H1 (cell line): ENCODE measurements at regions of chr4 and their contacts with region 1.

Region 1: DNA sequence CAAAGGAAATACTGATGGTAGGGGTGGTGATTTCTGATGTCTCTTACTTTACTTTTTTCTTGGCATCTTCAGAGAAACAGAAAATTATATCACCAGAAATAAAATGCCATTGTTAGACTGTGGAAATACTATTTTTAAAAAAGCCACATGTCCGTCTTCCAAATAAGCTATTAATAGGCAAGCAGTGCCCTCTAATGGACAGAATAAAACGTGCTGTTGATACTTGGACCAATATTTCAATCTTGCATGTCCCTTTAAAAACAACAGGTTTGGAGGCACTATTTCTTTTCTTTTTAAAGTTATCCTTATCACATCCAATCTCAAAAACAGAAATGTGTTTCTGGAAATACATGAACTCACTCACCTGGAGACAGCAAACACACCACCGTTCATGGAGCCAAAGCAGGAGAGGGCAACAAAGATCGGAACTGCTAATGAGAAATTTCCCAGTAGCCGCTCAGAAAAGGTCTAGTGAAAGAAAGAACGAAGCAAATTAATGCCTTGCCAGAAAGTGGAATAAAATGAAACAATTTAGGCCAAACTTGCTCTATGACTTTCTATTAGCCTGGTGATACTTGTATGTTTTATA is 59.2 kb downstream of the SLC7A11 start:
- DNase-seq: no peak
- H3K4me3 ChIP-seq: no peak overlapping the region
- H3K27ac ChIP-seq: no peak overlapping the region
- H3K4me1 ChIP-seq: peaks cover 0 to 7% (median 5%) of the 10 kb centered on the region in 4 experiments; a peak in 2 of 7 replicates
- H3K27me3 ChIP-seq: no peaks in the 10 kb centered on the region
- CTCF ChIP-seq: peak in 2 of 3 experiments; percentile 25 to 57; a peak in 2 of 4 replicates
- EP300 ChIP-seq: no peak
- POLR2A ChIP-seq: no peak
- RAD21 ChIP-seq: peak; percentile 79

Region 2: GRCh38 chr4:137735561-137736104 is 447.3 kb before region 1 on chr4:
- CTCF ChIA-PET with region 1: interaction called, 10 read pairs
- POLR2A ChIA-PET with region 1: no interaction called
- DNase-seq: no peak
- H3K4me3 ChIP-seq: no peak overlapping the region
- H3K27ac ChIP-seq: no peak overlapping the region
- H3K4me1 ChIP-seq: no peaks in the 10 kb centered on the region
- H3K27me3 ChIP-seq: no peaks in the 10 kb centered on the region
- CTCF ChIP-seq: no peak
- EP300 ChIP-seq: no peak
- POLR2A ChIP-seq: no peak
- RAD21 ChIP-seq: no peak

Region 3: GRCh38 chr4:137923494-137923893 is 259.4 kb before region 1 on chr4:
- CTCF ChIA-PET with region 1: no interaction called
- POLR2A ChIA-PET with region 1: no interaction called
- DNase-seq: no peak
- H3K4me3 ChIP-seq: no peak overlapping the region
- H3K27ac ChIP-seq: no peak overlapping the region
- H3K4me1 ChIP-seq: no peaks in the 10 kb centered on the region
- H3K27me3 ChIP-seq: no peaks in the 10 kb centered on the region
- CTCF ChIP-seq: no peak
- EP300 ChIP-seq: no peak
- POLR2A ChIP-seq: no peak
- RAD21 ChIP-seq: no peak

Region 4: DNA sequence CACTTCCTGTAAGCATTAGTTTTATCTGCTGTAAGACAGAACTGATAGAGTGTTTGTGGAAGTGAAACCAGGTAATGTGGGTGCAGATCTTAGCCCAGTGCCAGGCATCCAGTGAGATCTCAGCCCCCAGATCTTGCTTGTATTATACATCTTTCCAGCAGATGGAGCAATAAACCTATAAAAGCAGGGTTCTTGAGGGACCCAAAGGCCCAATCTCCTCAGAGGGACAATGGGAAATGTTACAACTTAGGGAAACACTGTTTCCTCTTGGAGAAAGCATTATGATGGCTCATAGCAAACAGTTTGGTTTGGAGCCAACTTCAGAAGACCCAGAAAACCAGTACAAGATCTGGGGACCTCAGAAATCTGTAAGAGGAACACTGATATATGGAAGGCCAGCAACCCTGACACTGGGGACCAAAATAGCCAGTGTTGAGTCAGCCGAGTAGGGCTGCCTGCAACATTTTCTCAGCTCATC is 147.1 kb before region 1 on chr4:
- CTCF ChIA-PET with region 1: interaction called, 82 read pairs
- POLR2A ChIA-PET with region 1: no interaction called
- DNase-seq: no peak
- H3K4me3 ChIP-seq: no peak overlapping the region
- H3K27ac ChIP-seq: no peak overlapping the region
- H3K4me1 ChIP-seq: no peaks in the 10 kb centered on the region
- H3K27me3 ChIP-seq: no peaks in the 10 kb centered on the region
- CTCF ChIP-seq: peak in 2 of 3 experiments; percentile 61 to 77; a peak in 3 of 4 replicates
- EP300 ChIP-seq: no peak
- POLR2A ChIP-seq: no peak
- RAD21 ChIP-seq: peak; percentile 91 to 95

Region 5: GRCh38 chr4:138236035-138236434 is 53.1 kb after region 1 on chr4:
- CTCF ChIA-PET with region 1: no interaction called
- POLR2A ChIA-PET with region 1: no interaction called
- DNase-seq: no peak
- H3K4me3 ChIP-seq: no peak overlapping the region
- H3K27ac ChIP-seq: no peak overlapping the region
- H3K4me1 ChIP-seq: no peaks in the 10 kb centered on the region
- H3K27me3 ChIP-seq: no peaks in the 10 kb centered on the region
- CTCF ChIP-seq: no peak
- EP300 ChIP-seq: no peak
- POLR2A ChIP-seq: no peak; a peak in 1 of 3 replicates
- RAD21 ChIP-seq: no peak

Region 6: DNA sequence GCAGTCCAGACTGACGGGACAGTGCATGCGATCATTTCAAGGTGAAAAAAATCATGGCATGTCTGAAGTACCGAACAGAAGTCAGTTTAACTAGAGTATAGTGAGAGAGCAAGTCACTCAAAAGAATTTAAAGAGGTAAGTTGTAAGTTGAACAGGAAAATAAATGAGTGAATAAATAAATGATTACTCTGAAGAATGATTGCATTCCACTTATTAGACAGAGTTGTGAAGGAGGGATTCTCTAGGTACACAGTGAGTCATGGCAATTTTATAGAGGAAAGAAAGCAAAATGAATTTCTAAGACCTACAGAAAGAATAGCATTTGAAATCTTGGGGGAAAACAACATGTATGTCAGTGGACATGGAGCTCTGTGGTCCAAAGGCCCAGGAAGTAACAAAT is 96.4 kb after region 1 on chr4:
- CTCF ChIA-PET with region 1: no interaction called
- POLR2A ChIA-PET with region 1: no interaction called
- DNase-seq: no peak
- H3K4me3 ChIP-seq: no peak overlapping the region
- H3K27ac ChIP-seq: no peak overlapping the region
- H3K4me1 ChIP-seq: no peaks in the 10 kb centered on the region
- H3K27me3 ChIP-seq: no peaks in the 10 kb centered on the region
- CTCF ChIP-seq: no peak
- EP300 ChIP-seq: no peak
- POLR2A ChIP-seq: no peak
- RAD21 ChIP-seq: no peak